ENCODE measurements at regions of chr1 and their contacts with region 1.

Region 1: DNA sequence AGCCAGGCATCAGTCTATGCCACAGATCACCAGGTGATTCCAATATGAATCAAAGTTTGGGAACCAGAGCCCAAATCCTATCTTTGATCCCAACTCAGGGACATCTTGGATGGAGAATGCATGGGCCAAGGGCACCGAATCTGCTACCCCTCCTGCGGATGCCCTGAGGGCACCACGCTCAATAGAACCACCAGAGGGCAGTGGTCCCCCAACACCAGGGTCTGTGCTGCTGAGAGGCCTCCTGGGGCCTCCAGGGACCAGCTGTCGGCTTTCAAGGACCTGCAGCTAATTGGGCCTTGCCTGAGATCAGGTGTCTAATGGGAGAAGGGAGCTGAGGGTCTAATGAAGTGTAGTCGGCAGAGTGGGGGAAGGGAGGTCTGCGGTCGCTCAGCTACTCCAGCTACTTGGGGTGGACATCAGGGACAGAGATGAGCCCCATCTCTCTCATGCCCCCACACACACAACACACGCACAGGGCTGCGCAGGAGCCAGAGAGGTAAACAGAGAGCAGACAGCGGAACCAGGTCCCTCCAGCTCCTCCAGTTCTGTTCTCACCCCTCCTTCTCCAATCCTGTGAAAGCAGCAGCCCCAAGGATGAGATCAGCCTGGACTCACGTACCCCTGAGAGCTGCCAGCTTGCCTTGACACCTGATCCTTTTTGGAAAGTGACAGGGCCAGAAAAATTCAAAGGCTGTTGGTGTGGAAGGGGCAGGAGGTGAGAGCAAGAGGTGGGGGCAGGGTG is 34.9 kb upstream of the PPP1R15B start:
- DNase-seq: peak; percentile 65 to 82
- ATAC-seq: peak; percentile 50 to 54
- H3K4me3 ChIP-seq: peak overlapping the region in 1 of 4 donors; percentile 17
- H3K27ac ChIP-seq: peak overlapping the region; percentile 90 to 98 (median 94)
- H3K4me1 ChIP-seq: peaks cover 63 to 85% of the 10 kb centered on the region in 2 donors
- H3K27me3 ChIP-seq: no peaks in the 10 kb centered on the region
- CTCF ChIP-seq: peak; percentile 89 to 93 (median 91)
- POLR2A ChIP-seq: no peak

Region 2: DNA sequence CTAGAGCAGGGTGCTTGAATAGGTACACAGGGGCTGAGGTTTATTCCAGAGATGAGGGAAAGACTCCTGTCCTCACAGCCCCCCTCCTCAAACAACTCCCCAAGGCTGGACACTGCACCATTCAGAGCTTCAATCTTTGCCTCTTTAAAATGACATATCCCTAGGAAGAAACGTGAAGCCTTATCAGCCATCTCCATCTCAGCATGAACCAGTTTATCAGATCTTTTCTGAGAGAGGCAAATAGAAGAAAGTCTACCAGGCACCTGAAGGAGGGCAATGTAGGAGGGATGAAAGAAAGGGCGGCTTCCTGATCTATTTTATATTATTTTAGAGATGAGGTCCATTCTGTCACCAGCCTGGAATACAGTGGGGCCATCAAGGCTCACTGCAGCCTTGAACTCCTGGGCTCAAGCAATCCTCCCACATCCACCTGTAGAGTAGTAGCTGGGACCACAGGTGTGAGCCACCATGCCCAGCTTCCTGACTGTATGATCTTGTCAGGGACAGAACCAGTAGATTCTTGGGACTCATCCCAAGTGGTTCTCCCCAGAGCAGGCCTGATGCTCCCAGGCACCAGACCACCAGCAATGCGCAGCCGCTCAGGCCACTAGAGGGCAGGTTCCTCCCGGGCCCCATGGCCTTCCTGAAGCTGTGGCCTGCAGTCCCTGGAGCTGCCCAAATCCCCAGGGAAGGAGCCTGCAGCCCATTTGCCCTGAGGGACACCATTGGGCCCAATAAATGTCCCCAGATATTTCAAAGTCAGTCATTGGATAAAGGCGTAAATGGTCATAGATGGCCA is 188.4 kb before region 1 on chr1:
- in situ Hi-C with region 1: no loop called
- intact Hi-C with region 1: no loop called
- DNase-seq: no peak
- ATAC-seq: no peak
- H3K4me3 ChIP-seq: no peak overlapping the region
- H3K27ac ChIP-seq: no peak overlapping the region
- H3K4me1 ChIP-seq: peaks cover 0 to 5% of the 10 kb centered on the region in 2 donors
- H3K27me3 ChIP-seq: no peaks in the 10 kb centered on the region
- CTCF ChIP-seq: peak; percentile 27 to 57 (median 46)
- POLR2A ChIP-seq: no peak

Region 3: DNA sequence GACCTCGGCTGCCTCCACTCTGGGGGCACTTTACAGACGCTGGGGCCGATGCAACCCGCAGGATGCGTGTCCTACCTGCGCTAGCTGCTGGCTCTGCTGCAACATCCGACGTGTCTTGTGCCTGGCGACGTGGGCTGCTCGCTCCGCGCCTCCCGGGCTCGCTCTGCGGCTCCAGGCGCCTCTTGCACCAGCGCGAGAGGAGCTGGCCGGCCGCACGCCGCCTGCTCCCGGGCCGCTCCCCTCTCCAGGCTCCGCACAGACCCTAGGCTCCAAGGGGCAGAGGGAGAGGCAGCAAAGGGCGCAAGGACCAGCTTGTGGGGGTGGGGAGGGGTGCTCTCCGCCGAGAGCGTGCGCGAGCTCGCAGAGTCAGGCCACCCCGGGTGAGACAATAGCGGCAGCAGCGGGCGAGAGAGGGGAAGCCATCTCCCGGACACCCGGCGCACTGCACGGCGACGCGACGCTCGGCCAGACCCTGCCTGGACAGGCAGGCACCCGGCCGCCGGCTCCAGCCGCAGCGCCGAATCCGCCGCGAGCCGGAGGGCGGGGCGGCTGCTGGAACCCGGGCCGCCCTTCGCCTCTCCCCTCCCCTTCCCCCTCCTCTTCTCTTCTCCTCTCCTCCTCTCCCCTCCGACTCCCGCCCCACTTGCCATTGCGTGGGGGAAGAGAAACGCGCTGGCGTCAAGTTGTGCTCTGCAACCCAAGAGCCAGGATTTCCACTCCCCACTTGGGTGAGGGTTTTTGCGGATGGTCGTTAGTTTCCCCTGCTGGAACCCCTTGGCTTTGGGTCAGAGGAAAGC is 47.9 kb after region 1 on chr1 and contains the start of gene PIK3C2B:
- in situ Hi-C with region 1: no loop called
- intact Hi-C with region 1: loop called (anchors 1 kb)
- DNase-seq: peak; percentile 65 to 74
- ATAC-seq: peak; percentile 92
- H3K4me3 ChIP-seq: peak within 1 kb of the TSS; percentile 60 to 99 (median 87)
- H3K27ac ChIP-seq: peak within 1 kb of the TSS; percentile 70 to 89 (median 84)
- H3K4me1 ChIP-seq: peaks cover 21 to 29% of the 10 kb centered on the region in 2 donors
- H3K27me3 ChIP-seq: no peaks in the 10 kb centered on the region
- CTCF ChIP-seq: peak; percentile 74 to 84 (median 78)
- POLR2A ChIP-seq: peak in 1 of 2 donors; percentile 46
- total RNA-seq, gene PIK3C2B: 2.8 to 6.0 (median 3.8) TPM

Measured in gastrocnemius medialis (tissue), 4 donors.